ENCODE measurements at regions of chr20 and their contacts with region 1.

Region 1: DNA sequence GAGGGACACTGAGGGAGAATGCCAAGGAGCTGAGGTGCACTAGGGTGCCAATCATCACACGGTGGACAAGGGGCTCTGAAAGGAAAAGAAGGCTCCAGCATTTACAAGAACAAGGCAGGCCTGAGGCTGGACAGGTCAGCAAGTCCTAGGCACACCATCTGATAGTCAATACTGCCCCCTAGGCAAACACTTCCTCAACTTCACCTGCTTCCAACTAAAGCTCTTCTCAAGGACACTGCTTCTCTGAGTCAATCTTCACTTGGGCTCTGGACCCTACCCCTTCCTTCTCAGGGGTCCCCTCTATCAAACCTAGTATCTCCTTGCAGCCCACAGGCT is 37.7 kb upstream of the SLC4A11 start:
- DNase-seq: peak; percentile 49 to 66
- ATAC-seq: peak; percentile 69 to 88; a peak in 4 of 6 replicates
- H3K4me3 ChIP-seq: no peak overlapping the region
- H3K27ac ChIP-seq: no peak overlapping the region
- H3K4me1 ChIP-seq: no peaks in the 10 kb centered on the region
- CTCF ChIP-seq: peak; percentile 41; the same call in 2 of the 3 replicates
- EP300 ChIP-seq: no peak
- POLR2A ChIP-seq: no peak
- RAD21 ChIP-seq: peak; percentile 51 to 68; a peak in 4 of 5 replicates

Region 2: DNA sequence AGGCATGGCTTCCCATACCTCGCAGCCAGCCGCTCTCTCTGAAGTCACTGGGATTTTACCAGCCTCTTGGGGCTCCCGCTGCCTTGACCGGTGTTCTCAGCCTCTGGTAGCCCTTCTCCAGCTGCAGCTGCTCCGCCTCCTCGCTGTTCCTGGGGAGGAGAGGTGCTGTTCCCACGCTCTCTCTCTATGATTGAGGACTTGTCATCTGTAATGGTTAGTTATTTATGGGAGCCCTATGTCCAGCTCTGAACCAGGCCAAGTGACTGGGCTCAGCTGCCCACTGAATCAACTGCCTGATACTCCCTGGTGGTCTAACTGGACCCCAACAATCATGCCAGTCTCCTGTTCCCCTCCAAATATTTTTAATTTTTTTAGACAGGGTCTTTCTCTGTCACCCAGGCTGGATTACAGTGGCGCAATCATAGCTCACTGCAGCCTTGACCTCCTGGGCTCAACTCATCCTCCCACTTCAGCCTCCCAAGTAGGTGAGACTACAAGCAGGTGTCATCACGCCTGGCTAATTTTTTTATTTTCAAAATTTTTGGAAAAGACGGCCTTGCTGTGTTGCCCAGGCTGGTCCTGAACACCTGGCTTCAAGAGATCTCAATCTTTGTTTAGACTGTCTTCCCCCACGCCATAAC is 32.8 kb before region 1 on chr20:
- CTCF ChIA-PET with region 1: no interaction called
- POLR2A ChIA-PET with region 1: no interaction called
- DNase-seq: no peak
- ATAC-seq: no peak
- H3K4me3 ChIP-seq: no peak overlapping the region
- H3K27ac ChIP-seq: no peak overlapping the region
- H3K4me1 ChIP-seq: peaks cover 23% of the 10 kb centered on the region
- CTCF ChIP-seq: no peak
- EP300 ChIP-seq: no peak
- POLR2A ChIP-seq: no peak
- RAD21 ChIP-seq: no peak

Region 3: DNA sequence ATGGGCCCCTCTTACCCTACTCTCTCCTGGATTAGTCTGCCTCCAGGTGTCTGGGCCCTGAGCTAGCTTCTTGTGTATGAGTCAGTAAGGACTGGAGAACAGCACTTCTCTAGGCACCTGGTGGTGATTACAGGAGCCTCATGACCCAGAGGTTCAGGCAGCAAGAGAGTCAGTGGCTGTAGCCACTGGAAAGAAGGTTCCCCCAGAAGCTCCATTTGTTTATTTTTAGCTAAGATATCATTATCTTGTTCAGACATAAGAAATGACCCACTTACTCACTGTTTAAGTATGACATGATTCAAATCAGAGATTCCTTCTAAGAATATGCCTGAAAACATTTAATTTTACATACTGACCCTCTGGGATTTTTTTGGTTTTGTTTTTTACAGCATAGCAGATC is 14.1 kb before region 1 on chr20:
- CTCF ChIA-PET with region 1: interaction called, 13 read pairs
- POLR2A ChIA-PET with region 1: no interaction called
- DNase-seq: no peak
- ATAC-seq: no peak
- H3K4me3 ChIP-seq: no peak overlapping the region
- H3K27ac ChIP-seq: no peak overlapping the region
- H3K4me1 ChIP-seq: no peaks in the 10 kb centered on the region
- CTCF ChIP-seq: no peak
- EP300 ChIP-seq: no peak
- POLR2A ChIP-seq: no peak
- RAD21 ChIP-seq: no peak

Region 4: GRCh38 chr20:3312940-3313682 is 36.5 kb after region 1 on chr20:
- CTCF ChIA-PET with region 1: interaction called, 27 read pairs
- POLR2A ChIA-PET with region 1: no interaction called
- DNase-seq: peak; percentile 24 to 70
- ATAC-seq: peak; percentile 81 to 89
- H3K4me3 ChIP-seq: no peak overlapping the region; the same call in 2 of the 3 replicates
- H3K27ac ChIP-seq: peak overlapping the region; percentile 79 to 82
- H3K4me1 ChIP-seq: peaks cover 35% of the 10 kb centered on the region
- CTCF ChIP-seq: no peak
- EP300 ChIP-seq: peak in 1 of 2 experiments; percentile 29; a peak in 1 of 5 replicates
- POLR2A ChIP-seq: no peak
- RAD21 ChIP-seq: no peak